Posterior vena cava (tissue), 2 donors: ENCODE measurements at regions of chr15 and their contacts with region 1.

Region 1: GRCh38 chr15:66851226-66852071 is 149.4 kb downstream of the SMAD6 start:
- DNase-seq: peak; percentile 96

Region 2: GRCh38 chr15:66603301-66604179 is 247.9 kb before region 1 on chr15:
- intact Hi-C with region 1: loop called in 1 of 2 experiments (anchors 5 kb)
- DNase-seq: peak; percentile 90

Region 3: DNA sequence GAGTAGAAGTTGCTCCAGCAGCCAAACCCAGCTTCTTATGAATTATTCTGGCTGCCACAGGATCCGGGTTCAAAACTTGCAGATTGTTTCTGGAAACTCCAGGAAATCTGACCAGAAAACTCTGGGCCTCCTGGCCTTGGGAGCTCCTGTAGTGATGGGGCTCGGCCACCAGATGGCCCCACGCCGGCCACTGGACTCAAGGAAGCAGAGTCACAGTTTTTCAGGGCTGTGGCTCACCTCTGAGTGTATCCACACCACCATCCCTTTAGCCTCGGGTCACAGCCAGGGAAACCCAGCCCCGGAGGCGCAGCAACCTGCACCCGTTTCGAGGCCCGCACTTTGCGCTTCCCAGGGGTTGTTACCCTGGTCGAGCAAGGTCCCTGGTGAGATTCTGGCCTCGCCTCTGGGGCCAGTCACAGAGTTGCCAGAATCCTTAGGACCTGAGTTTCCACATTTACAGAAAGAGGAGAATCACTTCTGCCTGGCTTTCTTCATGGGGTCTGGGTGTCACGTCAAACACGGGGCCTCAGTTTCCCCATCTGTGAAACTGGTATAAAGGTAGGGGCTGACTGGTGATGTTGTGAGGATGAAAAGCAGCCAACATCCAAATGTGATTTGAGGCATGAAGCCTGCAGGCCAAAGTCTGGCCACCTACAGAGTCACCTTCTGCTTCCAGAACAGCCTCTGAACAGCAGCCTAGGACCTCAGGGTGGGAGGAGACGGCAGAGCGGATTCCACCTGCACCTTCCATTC is 232.1 kb before region 1 on chr15:
- intact Hi-C with region 1: loop called in 1 of 2 experiments (anchors 5 kb)
- DNase-seq: peak; percentile 93

Region 4: GRCh38 chr15:66789029-66790025 is 62.1 kb before region 1 on chr15:
- intact Hi-C with region 1: loop called in 1 of 2 experiments (anchors 5 kb)
- DNase-seq: no peak